ENCODE measurements at regions of chr19 and their contacts with region 1.

Region 1: DNA sequence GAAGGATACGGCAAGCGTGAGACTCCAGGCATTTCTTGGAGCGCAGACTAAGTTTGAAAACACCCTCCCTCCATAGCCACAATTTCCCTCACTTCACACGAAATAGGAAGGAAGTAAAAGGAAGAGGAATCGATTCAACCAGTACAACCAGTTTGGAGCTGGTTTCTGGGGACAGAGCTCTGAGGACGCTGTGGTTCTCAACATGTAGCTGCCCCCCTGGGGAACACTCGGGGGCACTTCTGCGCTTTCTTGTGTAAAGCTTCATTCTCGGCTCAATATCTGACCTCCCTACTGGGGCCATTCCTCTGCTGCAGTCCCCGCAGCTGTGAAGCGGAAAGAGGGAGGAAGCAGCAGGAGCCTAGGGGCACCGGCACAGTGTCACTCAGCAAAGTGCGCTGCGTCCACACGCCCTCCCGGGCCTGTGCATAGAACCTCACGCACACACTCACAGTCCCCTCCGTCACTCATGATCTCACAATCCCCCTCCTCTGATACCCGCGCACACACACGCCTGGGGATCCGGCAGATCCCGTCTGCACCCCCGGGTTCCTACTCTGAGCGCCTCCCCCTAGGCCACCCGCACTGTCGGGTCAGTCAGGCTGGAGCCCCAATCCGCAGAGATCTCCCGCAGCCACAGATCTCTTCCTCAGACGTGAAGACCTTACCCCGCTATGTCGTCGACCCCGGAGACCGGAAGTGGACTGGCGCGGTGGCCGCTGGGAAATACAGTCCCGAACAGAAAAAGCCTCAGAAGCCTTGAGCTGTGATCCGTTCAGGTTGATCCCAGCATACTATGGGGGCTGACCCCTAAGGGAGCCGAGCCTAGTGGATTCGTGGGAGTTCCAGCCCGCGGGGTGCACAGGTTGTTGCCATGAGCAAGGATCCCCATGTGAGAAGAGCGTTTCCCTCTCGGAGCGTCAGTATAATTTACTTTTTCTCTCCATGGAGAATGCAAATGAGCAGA is at the start of gene ZNF780A:
- DNase-seq: peak; percentile 55
- ATAC-seq: peak; percentile 90
- H3K4me3 ChIP-seq: peak within 1 kb of the TSS; percentile 92
- H3K27ac ChIP-seq: peak within 1 kb of the TSS; percentile 61
- H3K4me1 ChIP-seq: 0 out of 2 replicates have a peak, but pooled peaks cover 9% of the 10 kb centered on the region
- H3K27me3 ChIP-seq: no peaks in the 10 kb centered on the region
- CTCF ChIP-seq: no peak
- total RNA-seq, gene ZNF780A: 3.3 and 9.0 TPM in 2 replicates

Region 2: DNA sequence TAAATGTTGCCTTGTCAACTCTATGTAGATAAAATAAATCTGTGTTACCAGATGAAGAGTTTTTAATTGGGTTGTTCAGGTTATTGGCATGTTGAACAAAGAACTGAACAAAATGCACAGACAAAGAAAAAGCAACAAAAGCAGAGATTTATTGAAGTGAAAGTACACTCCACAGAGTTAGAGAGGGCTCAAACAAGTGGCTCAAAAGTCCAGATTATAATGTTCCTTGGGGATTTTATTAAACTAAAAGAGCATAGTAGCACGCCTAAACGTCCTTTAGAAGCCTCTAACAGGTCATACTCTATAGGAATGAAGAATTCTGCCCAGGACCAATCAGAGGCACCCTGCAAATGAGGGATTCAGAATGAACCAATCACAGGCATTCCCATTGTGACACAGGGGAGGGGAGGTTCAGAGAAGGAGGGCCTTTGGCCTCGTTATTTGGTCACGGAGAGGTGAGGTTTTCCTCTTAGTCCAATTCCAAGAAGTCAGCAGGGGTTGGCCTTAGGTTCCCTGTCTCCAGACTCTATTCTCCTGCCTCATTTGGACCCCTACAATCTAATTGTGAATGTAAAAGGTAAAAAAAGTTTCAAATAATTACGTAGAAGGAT is 106.7 kb before region 1 on chr19:
- CTCF ChIA-PET with region 1: no interaction called
- POLR2A ChIA-PET with region 1: no interaction called
- intact Hi-C with region 1: loop called (anchors 10 kb)
- DNase-seq: no peak
- ATAC-seq: no peak
- H3K4me3 ChIP-seq: no peak overlapping the region
- H3K27ac ChIP-seq: no peak overlapping the region
- H3K4me1 ChIP-seq: no peaks in the 10 kb centered on the region
- H3K27me3 ChIP-seq: no peaks in the 10 kb centered on the region
- CTCF ChIP-seq: no peak

Region 3: GRCh38 chr19:40025938-40026596 is 64.5 kb before region 1 on chr19:
- CTCF ChIA-PET with region 1: no interaction called
- POLR2A ChIA-PET with region 1: no interaction called
- intact Hi-C with region 1: no loop called
- DNase-seq: no peak
- ATAC-seq: no peak
- H3K4me3 ChIP-seq: no peak overlapping the region
- H3K27ac ChIP-seq: no peak overlapping the region
- H3K4me1 ChIP-seq: no peaks in the 10 kb centered on the region
- H3K27me3 ChIP-seq: no peaks in the 10 kb centered on the region
- CTCF ChIP-seq: no peak

Region 4: DNA sequence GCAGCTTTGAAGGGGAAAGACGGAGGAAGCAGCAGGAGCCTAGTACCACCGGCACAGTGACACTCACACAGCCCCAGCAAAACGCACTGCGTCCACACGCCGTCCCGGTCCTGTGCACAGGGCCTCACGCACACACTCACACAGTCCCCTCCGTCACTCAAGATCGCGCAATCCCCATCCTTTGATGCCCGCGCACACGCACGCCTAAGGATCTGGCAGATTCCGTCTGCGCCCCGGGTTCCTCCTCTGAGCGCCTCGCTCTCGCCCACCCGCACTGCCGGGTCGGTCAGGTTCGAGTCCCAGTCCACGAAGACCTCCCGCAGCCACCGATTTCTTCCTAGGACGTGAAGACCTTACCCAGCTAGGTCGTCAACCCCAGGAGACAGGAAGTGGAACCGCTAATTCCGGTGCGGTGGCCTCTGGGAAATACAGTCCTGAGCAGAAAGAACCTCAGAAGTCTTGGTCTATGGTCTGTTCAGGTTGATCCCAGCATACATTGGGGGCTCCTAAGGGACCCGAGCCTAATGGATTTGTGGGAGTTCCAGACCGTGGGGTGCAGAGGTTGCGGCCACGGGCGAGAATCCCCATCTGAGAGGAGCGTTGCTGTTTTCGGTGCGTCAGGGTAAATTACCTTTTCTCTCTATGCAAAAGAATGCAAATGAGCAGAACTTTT is 34.6 kb before region 1 on chr19 and contains the start of gene ZNF780B:
- CTCF ChIA-PET with region 1: no interaction called
- POLR2A ChIA-PET with region 1: no interaction called
- intact Hi-C with region 1: no loop called
- DNase-seq: peak; percentile 49
- ATAC-seq: peak; percentile 96
- H3K4me3 ChIP-seq: peak within 1 kb of the TSS; percentile 99
- H3K27ac ChIP-seq: 0 out of 2 replicates have a peak within 1 kb of the TSS, but pooled peaks have one; percentile 20
- H3K4me1 ChIP-seq: peaks cover 3% of the 10 kb centered on the region; the same call in 1 of the 2 replicates
- H3K27me3 ChIP-seq: no peaks in the 10 kb centered on the region
- CTCF ChIP-seq: no peak
- total RNA-seq, gene ZNF780B: 7.1 and 8.5 TPM in 2 replicates